A673 (cell line): ENCODE measurements at regions of chr3 and their contacts with region 1.

Region 1: DNA sequence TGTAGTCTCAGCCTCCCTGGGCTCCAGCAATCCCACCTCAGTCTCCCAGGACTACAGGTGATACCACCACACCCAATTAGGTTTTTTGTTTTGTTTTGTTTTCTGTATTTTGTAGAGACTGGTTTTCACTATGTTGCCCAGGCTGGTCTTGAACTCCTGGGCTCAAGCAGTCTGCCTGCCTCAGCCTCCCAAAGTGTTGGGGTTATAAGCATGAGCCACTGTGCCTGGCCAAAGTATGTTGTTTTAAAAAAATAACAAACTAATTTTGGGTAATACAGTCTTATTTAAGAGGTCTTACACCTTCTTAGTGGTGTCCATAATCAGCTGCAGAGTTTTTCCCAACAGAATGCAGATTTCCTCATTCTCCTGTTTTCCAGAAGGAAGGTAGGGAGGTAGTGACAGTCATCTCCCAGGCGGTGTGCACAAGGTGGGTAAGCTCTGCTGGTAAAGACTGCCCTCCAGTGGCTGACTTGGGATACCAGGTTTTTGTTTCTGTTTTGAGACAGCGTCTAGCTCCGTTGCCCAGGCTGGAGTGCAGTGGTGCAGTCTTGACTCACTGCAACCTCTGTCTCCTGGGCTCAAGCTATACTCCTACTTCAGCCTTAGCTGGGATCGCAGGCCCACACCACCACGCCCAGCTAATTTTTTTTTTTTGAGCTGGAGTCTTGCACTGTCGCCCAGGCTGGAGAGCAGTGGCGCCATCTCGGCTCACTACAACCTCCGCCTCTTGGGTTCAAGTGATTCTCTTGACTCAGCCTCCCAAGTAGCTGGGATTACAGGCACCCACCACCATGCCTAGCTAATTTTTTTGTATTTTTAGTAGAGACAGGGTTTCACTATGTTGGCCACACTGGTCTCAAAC is 58.4 kb downstream of the MAP6D1 start:
- DNase-seq: peak; percentile 76
- H3K4me3 ChIP-seq: no peak overlapping the region
- H3K27ac ChIP-seq: no peak overlapping the region
- H3K4me1 ChIP-seq: no peaks in the 10 kb centered on the region
- H3K27me3 ChIP-seq: no peaks in the 10 kb centered on the region
- CTCF ChIP-seq: peak; percentile 84

Region 2: GRCh38 chr3:183122257-183122932 is 644.6 kb before region 1 on chr3:
- CTCF ChIA-PET with region 1: interaction called, 3 read pairs
- POLR2A ChIA-PET with region 1: no interaction called
- intact Hi-C with region 1: loop called (anchors 10 kb)
- DNase-seq: peak; percentile 69
- H3K4me3 ChIP-seq: no peak overlapping the region
- H3K27ac ChIP-seq: no peak overlapping the region
- H3K4me1 ChIP-seq: peaks cover 4% of the 10 kb centered on the region
- H3K27me3 ChIP-seq: peaks cover 3% of the 10 kb centered on the region
- CTCF ChIP-seq: peak; percentile 88

Region 3: GRCh38 chr3:183468424-183468823 is 298.6 kb before region 1 on chr3:
- CTCF ChIA-PET with region 1: no interaction called
- POLR2A ChIA-PET with region 1: no interaction called
- intact Hi-C with region 1: loop called (anchors 2 kb)
- DNase-seq: no peak
- H3K4me3 ChIP-seq: no peak overlapping the region
- H3K27ac ChIP-seq: no peak overlapping the region
- H3K4me1 ChIP-seq: no peaks in the 10 kb centered on the region
- H3K27me3 ChIP-seq: no peaks in the 10 kb centered on the region
- CTCF ChIP-seq: no peak

Region 4: GRCh38 chr3:183502237-183503181 is 264.5 kb before region 1 on chr3:
- CTCF ChIA-PET with region 1: interaction called, 7 read pairs
- POLR2A ChIA-PET with region 1: no interaction called
- intact Hi-C with region 1: loop called (anchors 2 kb)
- DNase-seq: peak; percentile 38
- H3K4me3 ChIP-seq: no peak overlapping the region
- H3K27ac ChIP-seq: no peak overlapping the region
- H3K4me1 ChIP-seq: no peaks in the 10 kb centered on the region
- H3K27me3 ChIP-seq: no peaks in the 10 kb centered on the region
- CTCF ChIP-seq: peak; percentile 65